Activated T-helper 1 cell treated with anti-CD3 and anti-CD28 coated beads, Interleukin-12 subunit alpha, Interleukin-12 subunit beta, Interleukin-2, Interleukin-4 antibody, amounts not matched to agents 30 ng/mL and 10 ng/mL and 1 ng/mL, durations not matched to agents 14 hours and 24 hours and 36 hours (primary cell): ENCODE measurements at regions of chr1 and their contacts with region 1.

Region 1: GRCh38 chr1:65830306-65830705 is 37.6 kb downstream of the PDE4B start:
- DNase-seq: peak; percentile 27
- H3K4me3 Mint-ChIP-seq: peak overlapping the region; percentile 31
- H3K27ac Mint-ChIP-seq: peak overlapping the region; percentile 79
- H3K4me1 Mint-ChIP-seq: peaks cover 36% of the 10 kb centered on the region
- H3K27me3 Mint-ChIP-seq: peaks cover 19% of the 10 kb centered on the region

Region 2: GRCh38 chr1:65265651-65266351 is 564.5 kb before region 1 on chr1:
- intact Hi-C with region 1: no loop called
- DNase-seq: peak; percentile 16
- H3K4me3 Mint-ChIP-seq: peak overlapping the region; percentile 71
- H3K27ac Mint-ChIP-seq: no peak overlapping the region
- H3K4me1 Mint-ChIP-seq: peaks cover 36% of the 10 kb centered on the region
- H3K27me3 Mint-ChIP-seq: peaks cover 15% of the 10 kb centered on the region

Region 3: DNA sequence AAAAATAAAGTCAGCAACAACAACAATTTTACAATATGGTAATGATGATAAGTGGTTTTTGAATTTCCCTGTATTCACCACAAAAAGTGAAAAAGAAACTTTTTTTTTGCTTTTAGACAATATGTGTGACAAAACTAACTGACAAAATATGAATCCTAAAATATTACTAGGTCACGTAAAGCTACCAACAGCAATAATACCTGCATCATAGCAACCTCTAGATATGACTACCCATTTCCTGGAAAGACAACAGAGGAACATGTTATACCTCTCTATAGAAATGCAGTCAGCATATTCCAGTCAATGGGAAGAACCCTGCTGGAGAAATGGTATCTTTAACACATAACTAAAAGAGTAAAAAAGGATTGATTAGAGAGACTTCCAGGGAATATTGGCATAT is 36.1 kb after region 1 on chr1:
- intact Hi-C with region 1: loop called (anchors 1 kb)
- DNase-seq: no peak
- H3K4me3 Mint-ChIP-seq: no peak overlapping the region
- H3K27ac Mint-ChIP-seq: peak overlapping the region; percentile 41
- H3K4me1 Mint-ChIP-seq: peaks cover 14% of the 10 kb centered on the region
- H3K27me3 Mint-ChIP-seq: no peaks in the 10 kb centered on the region

Region 4: GRCh38 chr1:65992165-65992840 is 162.0 kb after region 1 on chr1:
- intact Hi-C with region 1: no loop called
- DNase-seq: no peak
- H3K4me3 Mint-ChIP-seq: no peak overlapping the region
- H3K27ac Mint-ChIP-seq: no peak overlapping the region
- H3K4me1 Mint-ChIP-seq: no peaks in the 10 kb centered on the region
- H3K27me3 Mint-ChIP-seq: peaks cover 17% of the 10 kb centered on the region

Region 5: GRCh38 chr1:66012106-66012784 is 181.9 kb after region 1 on chr1:
- intact Hi-C with region 1: no loop called
- DNase-seq: no peak
- H3K4me3 Mint-ChIP-seq: no peak overlapping the region
- H3K27ac Mint-ChIP-seq: no peak overlapping the region
- H3K4me1 Mint-ChIP-seq: peaks cover 12% of the 10 kb centered on the region
- H3K27me3 Mint-ChIP-seq: peaks cover 10% of the 10 kb centered on the region